ENCODE measurements at regions of chr4 and their contacts with region 1.

Region 1: DNA sequence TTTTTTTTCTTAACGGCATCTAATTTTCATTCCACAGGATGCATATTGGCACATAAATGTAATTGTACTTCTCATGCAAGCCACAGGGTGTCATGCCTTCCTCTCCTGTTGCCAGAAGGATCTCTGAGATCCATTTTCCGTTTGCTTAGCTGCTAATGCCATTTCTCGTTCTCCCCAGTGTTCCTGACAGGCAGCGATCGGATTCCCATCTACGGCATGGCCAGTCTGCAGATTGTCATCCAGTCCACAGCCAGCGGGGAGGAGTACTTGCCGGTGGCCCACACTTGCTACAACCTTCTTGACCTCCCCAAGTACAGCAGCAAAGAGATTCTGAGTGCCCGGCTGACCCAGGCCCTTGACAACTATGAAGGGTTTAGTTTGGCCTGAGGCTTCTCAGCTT is 8.9 kb upstream of the NAP1L5 start:
- DNase-seq: peak; percentile 23 to 62
- ATAC-seq: peak; percentile 98
- H3K4me3 ChIP-seq: no peak overlapping the region
- H3K27ac ChIP-seq: peak overlapping the region; percentile 61 to 75 (median 70)
- H3K4me1 ChIP-seq: peaks cover 5 to 12% of the 10 kb centered on the region in 2 donors
- H3K27me3 ChIP-seq: no peaks in the 10 kb centered on the region
- CTCF ChIP-seq: peak; percentile 40 to 73 (median 62)
- POLR2A ChIP-seq: no peak

Region 2: DNA sequence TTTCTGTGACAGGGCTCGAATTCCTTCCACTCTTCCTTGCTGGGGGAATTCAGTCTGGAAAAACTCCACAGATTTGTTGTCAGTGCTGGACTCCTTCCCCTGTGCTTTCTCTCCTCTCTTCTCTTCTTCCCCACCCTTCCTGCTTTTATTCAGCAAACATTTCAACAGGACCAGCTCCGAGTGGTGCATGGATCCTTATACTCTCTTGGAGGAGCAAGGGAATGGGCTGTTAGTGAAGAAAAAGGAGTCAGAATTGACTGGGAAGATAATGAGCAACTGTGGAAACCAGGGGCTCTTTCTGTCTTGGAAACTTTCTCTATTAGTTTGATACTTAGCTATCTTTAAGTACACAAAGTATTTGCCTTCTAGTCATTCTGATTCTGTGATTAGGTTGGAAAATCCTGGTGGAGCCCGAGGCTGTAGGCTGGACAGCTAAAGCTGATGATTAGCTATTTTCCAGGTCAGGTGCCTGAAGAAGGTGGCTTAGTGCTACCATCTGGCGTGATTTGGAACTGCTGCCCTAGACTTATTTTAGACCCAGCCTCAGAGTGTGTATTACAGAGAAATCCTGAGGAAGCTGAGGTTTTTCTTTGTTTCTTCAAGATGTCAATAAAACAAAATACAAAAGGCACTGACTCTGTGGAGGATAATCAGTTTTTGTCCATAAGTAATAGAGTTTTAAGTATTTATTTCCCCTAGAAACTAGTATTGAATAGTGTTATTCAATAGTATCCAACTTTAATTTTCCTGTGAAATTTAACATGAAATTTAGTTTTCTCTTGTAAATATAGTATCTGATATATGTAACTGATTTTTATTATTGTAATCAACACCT is 47.3 kb before region 1 on chr4:
- in situ Hi-C with region 1: no loop called
- intact Hi-C with region 1: no loop called
- DNase-seq: peak; percentile 40 to 48
- ATAC-seq: peak; percentile 97 to 98
- H3K4me3 ChIP-seq: no peak overlapping the region
- H3K27ac ChIP-seq: peak overlapping the region in 3 of 4 donors; percentile 9 to 40 (median 32)
- H3K4me1 ChIP-seq: peaks cover 0 to 10% of the 10 kb centered on the region in 2 donors
- H3K27me3 ChIP-seq: no peaks in the 10 kb centered on the region
- CTCF ChIP-seq: peak; percentile 70 to 83 (median 74)
- POLR2A ChIP-seq: no peak

Region 3: DNA sequence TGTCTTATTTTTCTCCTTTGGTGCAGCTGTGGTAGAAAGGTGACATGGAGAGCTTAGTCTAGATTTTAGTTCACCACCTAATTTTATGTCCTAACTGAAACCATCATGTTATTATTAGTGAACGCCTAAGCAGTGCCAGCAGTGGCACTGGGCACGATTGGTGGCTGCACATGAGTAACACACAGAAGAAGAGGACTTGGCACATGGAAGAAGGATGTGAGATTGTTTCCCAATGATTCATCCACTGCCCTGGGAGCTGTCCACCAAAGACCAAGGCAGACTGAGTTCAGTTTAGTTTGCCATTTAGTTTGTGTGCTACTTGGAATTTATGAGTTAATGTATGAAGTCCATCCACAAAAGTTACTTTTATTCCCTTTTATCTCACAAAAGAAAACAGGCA is 59.2 kb after region 1 on chr4:
- in situ Hi-C with region 1: no loop called
- intact Hi-C with region 1: loop called (anchors 2 kb)
- DNase-seq: peak; percentile 77 to 94
- ATAC-seq: peak; percentile 100
- H3K4me3 ChIP-seq: no peak overlapping the region
- H3K27ac ChIP-seq: peak overlapping the region; percentile 75 to 80 (median 75)
- H3K4me1 ChIP-seq: peaks cover 12 to 16% of the 10 kb centered on the region in 2 donors
- H3K27me3 ChIP-seq: no peaks in the 10 kb centered on the region
- CTCF ChIP-seq: no peak
- POLR2A ChIP-seq: no peak

Region 4: GRCh38 chr4:88792268-88792781 is 85.8 kb after region 1 on chr4:
- in situ Hi-C with region 1: no loop called
- intact Hi-C with region 1: loop called (anchors 1 kb)
- DNase-seq: no peak
- ATAC-seq: peak in 1 of 2 donors; percentile 8
- H3K4me3 ChIP-seq: no peak overlapping the region
- H3K27ac ChIP-seq: peak overlapping the region in 1 of 4 donors; percentile 3
- H3K4me1 ChIP-seq: peaks cover 0 to 3% of the 10 kb centered on the region in 2 donors
- H3K27me3 ChIP-seq: no peaks in the 10 kb centered on the region
- CTCF ChIP-seq: no peak
- POLR2A ChIP-seq: no peak

Region 5: GRCh38 chr4:88803600-88804096 is 97.1 kb after region 1 on chr4:
- in situ Hi-C with region 1: loop called in 3 of 4 experiments (anchors 5 to 10 kb)
- intact Hi-C with region 1: no loop called
- DNase-seq: peak; percentile 38 to 64
- ATAC-seq: peak; percentile 94 to 97
- H3K4me3 ChIP-seq: no peak overlapping the region
- H3K27ac ChIP-seq: peak overlapping the region; percentile 28 to 74 (median 53)
- H3K4me1 ChIP-seq: peaks cover 9 to 39% of the 10 kb centered on the region in 2 donors
- H3K27me3 ChIP-seq: no peaks in the 10 kb centered on the region
- CTCF ChIP-seq: no peak
- POLR2A ChIP-seq: no peak

Region 6: DNA sequence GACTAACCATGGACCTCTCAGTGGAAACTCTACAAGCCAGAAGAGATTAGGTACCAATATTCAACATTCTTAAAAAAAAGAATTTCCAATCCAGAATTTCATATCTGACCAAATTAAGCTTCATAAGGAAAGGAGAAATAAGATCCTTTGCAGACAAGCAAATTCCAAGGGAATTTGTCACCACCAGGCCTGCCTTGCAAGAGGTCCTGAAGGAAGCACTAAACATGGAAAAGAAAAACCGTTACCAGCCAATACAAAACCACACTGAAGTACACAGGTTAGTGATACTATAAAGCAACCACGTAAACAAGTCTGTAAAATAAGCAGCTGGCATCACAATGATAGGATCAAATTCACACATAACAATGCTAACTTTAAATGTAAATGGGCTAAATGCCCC is 193.9 kb after region 1 on chr4:
- in situ Hi-C with region 1: no loop called
- intact Hi-C with region 1: loop called (anchors 10 kb)
- DNase-seq: no peak
- ATAC-seq: no peak
- H3K4me3 ChIP-seq: no peak overlapping the region
- H3K27ac ChIP-seq: no peak overlapping the region
- H3K4me1 ChIP-seq: peaks cover 0 to 3% of the 10 kb centered on the region in 2 donors
- H3K27me3 ChIP-seq: no peaks in the 10 kb centered on the region
- CTCF ChIP-seq: no peak
- POLR2A ChIP-seq: no peak

Region 7: DNA sequence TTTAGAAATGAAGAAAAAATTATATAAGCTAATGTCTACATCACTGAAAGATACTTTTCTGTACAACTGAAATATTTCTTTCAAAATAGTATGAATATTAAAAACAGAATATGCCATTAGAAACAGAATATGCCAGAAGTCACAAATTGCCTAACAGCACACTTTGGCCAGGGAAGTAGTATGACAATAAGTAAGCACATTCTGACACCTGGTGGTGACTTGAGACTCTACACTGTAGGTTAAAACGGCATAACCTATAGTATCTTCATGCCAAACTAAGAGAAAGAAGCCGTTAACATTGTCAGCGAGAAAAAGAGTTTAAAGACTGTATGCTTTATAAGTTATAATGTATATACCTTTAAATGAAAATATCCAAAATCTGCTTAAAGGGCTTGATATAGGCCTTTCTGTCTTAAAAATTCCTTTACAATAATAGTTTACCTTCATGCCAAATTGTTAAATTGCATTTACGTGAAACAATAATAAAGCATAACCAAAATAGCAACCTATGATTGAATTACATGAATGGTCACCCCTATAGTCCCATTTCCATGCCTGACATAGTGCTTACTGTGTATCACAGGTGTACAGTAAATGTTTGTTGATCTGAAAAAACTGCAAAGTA is 317.6 kb after region 1 on chr4:
- in situ Hi-C with region 1: loop called (anchors 5 to 10 kb)
- intact Hi-C with region 1: loop called (anchors 2 kb)
- DNase-seq: peak; percentile 31 to 42
- ATAC-seq: peak; percentile 97 to 100
- H3K4me3 ChIP-seq: no peak overlapping the region
- H3K27ac ChIP-seq: no peak overlapping the region
- H3K4me1 ChIP-seq: peaks cover 8 to 15% of the 10 kb centered on the region in 2 donors
- H3K27me3 ChIP-seq: no peaks in the 10 kb centered on the region
- CTCF ChIP-seq: peak; percentile 83 to 92 (median 86)
- POLR2A ChIP-seq: no peak